Dendritic cell treated with granulocyte-macrophage colony-stimulating factor and Interleukin-4, amounts not matched to agents 40 ng/mL and 50 ng/mL, for 4 days (primary cell): ENCODE measurements at regions of chr2 and their contacts with region 1.

Region 1: GRCh38 chr2:58571181-58571852 is 330.2 kb upstream of the FANCL start:
- H3K4me3 Mint-ChIP-seq: no peak overlapping the region
- H3K27ac Mint-ChIP-seq: no peak overlapping the region
- H3K4me1 Mint-ChIP-seq: peaks cover 24% of the 10 kb centered on the region
- H3K27me3 Mint-ChIP-seq: no peaks in the 10 kb centered on the region

Region 2: DNA sequence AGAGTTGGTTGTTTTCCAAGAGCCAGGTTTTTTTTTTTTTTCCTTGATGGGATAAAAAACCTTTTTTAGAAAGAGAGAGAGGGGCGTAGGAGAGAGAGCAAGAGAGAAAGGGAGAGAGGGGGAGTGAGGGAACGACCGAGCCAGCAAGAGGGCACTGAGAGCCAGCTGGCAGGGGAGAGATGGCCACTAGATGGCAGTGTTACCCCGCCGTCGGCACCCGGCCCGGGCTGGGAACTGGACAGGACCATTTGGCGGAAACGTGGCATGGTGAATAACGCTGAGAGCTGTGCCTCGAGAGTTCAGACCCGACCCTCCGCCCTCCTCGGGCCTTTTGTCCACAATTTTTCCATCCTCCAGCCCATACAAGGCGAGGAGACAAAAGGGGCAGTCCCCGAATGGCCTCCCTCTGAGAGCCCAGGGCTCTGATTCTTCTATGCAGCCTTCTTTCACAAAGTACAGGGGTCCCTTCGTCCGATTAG is 811.5 kb before region 1 on chr2:
- intact Hi-C with region 1: loop called (anchors 10 kb)
- H3K4me3 Mint-ChIP-seq: peak overlapping the region; percentile 59
- H3K27ac Mint-ChIP-seq: no peak overlapping the region
- H3K4me1 Mint-ChIP-seq: peaks cover 11% of the 10 kb centered on the region
- H3K27me3 Mint-ChIP-seq: no peaks in the 10 kb centered on the region

Region 3: DNA sequence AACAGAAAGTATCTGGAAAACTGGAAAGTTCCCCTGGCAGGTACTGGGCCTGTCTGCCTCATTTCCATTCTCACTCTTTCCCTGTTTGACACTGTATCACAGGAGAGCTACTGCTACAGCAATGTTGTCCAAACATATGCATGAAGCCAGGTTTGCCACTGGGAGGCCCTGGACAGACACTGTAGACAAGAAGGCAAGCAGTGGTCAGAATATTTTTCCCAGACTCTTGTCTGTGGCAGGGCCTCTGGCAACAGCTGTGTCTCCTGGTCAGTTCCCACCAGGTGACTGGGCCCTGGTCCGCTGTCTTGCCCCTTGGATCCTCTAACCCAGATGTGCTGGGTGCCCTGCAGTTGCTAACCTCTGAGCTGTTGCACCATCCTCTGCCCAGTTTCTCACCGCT is 151.3 kb before region 1 on chr2:
- intact Hi-C with region 1: no loop called
- H3K4me3 Mint-ChIP-seq: no peak overlapping the region
- H3K27ac Mint-ChIP-seq: no peak overlapping the region
- H3K4me1 Mint-ChIP-seq: peaks cover 4% of the 10 kb centered on the region
- H3K27me3 Mint-ChIP-seq: no peaks in the 10 kb centered on the region

Region 4: DNA sequence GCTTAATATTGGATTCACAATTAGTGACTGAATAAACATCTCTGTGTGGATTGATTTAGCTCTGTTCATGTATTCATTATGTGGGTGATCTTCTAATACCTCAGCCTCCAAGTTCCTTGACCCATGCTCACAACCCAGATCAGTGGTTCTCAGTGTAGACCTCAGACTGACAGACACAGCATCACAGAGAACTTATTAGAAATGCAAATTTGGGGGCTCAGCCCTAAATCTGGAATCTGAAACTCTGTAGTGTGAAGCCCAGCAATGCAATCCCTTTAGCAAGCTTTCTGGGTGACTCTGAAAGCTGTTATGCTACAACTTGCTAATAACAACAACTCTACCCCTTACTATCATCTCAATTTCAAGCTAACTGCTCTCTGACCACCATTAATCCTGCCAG is 57.1 kb before region 1 on chr2:
- intact Hi-C with region 1: no loop called
- H3K4me3 Mint-ChIP-seq: no peak overlapping the region
- H3K27ac Mint-ChIP-seq: no peak overlapping the region
- H3K4me1 Mint-ChIP-seq: no peaks in the 10 kb centered on the region
- H3K27me3 Mint-ChIP-seq: no peaks in the 10 kb centered on the region

Region 5: DNA sequence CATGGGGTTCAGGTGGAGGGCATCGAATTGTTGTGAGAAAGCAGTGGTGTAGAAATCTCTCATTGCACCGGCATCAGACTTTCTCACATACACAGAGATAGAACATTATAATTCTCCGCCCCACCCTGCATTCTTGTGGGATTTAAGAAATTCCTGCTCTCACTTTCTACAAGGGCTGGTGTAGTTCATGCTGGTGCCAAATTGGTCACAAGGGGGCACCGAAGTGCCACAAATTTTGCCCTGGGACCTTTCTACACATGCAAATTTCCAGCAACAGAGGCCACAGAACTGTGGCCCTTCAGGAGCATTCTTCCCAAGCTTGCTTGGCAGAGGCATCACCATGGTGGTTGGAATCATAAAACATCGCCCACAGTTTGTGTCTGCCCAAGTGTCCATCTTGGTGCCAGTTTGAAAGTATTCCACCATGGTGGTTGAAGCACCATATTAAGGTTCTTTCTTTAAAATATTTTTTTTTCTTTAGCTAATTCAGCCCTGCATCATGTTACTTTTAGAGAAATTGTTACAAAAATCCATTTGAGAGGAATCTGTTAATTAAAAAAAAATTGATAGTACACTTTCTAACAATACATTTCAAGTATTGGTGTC is 191.0 kb after region 1 on chr2:
- intact Hi-C with region 1: loop called (anchors 10 kb)
- H3K4me3 Mint-ChIP-seq: no peak overlapping the region
- H3K27ac Mint-ChIP-seq: no peak overlapping the region
- H3K4me1 Mint-ChIP-seq: peaks cover 14% of the 10 kb centered on the region
- H3K27me3 Mint-ChIP-seq: no peaks in the 10 kb centered on the region

Region 6: GRCh38 chr2:58871469-58872142 is 300.3 kb after region 1 on chr2:
- intact Hi-C with region 1: loop called (anchors 5 kb)
- H3K4me3 Mint-ChIP-seq: no peak overlapping the region
- H3K27ac Mint-ChIP-seq: no peak overlapping the region
- H3K4me1 Mint-ChIP-seq: no peaks in the 10 kb centered on the region
- H3K27me3 Mint-ChIP-seq: no peaks in the 10 kb centered on the region

Region 7: GRCh38 chr2:59196511-59196910 is 625.2 kb after region 1 on chr2:
- intact Hi-C with region 1: no loop called
- H3K4me3 Mint-ChIP-seq: no peak overlapping the region
- H3K27ac Mint-ChIP-seq: no peak overlapping the region
- H3K4me1 Mint-ChIP-seq: no peaks in the 10 kb centered on the region
- H3K27me3 Mint-ChIP-seq: no peaks in the 10 kb centered on the region

Region 8: DNA sequence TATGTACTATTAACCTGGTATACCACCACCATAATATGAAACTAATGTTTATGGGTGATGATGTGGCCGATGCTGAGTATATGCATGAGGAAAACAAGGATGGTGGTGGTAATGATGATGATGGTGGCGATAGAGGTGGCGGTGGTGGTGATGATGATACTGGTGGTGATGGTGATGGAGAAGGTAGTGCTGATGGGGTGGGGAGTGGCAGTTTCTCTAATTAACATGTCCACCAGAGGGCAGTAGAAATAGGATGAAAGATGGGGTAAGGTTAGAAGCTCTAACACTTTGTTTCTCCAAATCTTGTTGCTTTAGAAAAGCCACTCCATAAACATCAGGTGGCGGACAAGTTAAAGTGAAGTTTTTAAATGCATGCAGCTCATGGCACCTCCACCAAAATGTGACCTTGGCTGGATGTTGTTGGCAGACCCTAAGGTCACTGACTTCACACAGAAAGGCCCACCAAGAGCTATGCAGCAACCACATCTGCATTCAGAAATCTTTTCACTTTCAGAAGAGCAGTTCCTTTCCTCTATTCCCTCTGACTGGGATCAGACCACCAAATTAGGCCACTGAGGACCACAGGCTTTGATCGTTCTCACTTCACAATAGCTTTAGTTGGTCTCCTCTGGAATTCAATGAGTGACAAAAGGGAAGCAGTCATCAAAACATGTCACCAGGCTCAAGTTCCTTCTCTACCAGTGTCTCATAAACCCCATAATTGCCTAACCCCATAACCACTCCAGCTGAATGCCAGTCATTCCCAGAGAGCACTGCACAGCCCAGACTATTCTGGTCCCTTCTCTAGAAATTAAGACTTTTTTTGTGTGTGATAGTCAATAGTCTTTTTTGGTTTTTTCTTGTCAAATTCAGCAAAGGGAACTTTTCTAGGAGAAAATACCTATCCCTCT is 1989.7 kb after region 1 on chr2:
- intact Hi-C with region 1: loop called (anchors 10 kb)
- H3K4me3 Mint-ChIP-seq: no peak overlapping the region
- H3K27ac Mint-ChIP-seq: no peak overlapping the region
- H3K4me1 Mint-ChIP-seq: peaks cover 38% of the 10 kb centered on the region
- H3K27me3 Mint-ChIP-seq: peaks cover 6% of the 10 kb centered on the region